ENCODE measurements at regions of chr12 and their contacts with region 1.

Region 1: DNA sequence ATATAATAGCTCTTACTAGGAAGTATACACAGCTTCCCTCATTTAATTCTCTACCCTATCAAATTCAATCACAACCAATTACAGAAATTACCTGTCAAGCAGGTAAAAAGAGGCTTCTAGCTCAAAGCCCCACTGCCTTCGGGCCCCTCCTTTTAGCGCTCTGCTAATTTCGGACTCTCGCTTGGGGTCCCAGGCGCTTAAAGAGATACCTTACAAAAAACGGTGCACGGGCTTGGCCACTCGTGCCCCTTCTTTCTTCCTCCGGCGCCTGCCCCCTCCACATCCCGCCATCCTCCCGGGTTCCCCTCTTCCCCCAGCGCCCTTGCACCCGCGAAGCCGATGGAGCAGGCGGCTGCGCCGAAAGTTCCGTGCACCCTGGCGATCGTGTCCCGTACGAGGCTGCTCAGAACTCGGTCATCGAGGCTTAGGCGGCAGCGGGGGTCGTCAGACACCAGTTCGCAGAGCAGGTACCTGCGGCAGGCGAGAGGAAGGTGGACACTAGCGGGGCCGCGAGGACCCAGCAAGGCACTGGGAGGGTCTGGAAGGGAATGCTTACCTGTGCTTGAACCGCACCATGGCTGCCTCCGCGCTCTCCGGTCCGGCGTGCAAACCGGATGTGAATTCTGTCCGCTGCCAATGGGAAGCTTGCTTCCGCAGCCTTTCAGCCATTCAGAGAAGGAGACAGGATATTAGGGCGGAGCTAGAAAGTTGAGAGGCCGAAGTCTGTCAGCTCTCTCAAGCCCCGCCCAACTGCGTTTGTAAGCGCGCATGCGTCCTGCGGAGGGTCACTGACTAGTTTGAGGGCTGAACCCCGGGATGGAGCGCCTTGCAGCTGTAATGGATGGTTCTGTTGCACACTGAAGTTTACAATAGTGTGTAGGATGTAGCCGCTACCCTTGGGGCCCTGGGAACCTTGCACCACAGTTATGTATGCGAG is at the start of gene POP5:
- DNase-seq: peak; percentile 75
- H3K4me3 ChIP-seq: peak within 1 kb of the TSS; percentile 60 to 90 (median 78)
- H3K27ac ChIP-seq: peak within 1 kb of the TSS; percentile 71 to 87 (median 80)
- H3K4me1 ChIP-seq: peaks cover 19 to 47% (median 33%) of the 10 kb centered on the region in 3 donors
- H3K27me3 ChIP-seq: peaks cover 0 to 12% (median 0%) of the 10 kb centered on the region in 4 donors
- CTCF ChIP-seq: peak in 2 of 6 experiments; percentile 8 to 31
- POLR2A ChIP-seq: peak in 3 of 4 donors; percentile 31 to 58 (median 48)
- total RNA-seq, gene POP5: 15.6 to 28.1 (median 22.6) TPM

Region 2: DNA sequence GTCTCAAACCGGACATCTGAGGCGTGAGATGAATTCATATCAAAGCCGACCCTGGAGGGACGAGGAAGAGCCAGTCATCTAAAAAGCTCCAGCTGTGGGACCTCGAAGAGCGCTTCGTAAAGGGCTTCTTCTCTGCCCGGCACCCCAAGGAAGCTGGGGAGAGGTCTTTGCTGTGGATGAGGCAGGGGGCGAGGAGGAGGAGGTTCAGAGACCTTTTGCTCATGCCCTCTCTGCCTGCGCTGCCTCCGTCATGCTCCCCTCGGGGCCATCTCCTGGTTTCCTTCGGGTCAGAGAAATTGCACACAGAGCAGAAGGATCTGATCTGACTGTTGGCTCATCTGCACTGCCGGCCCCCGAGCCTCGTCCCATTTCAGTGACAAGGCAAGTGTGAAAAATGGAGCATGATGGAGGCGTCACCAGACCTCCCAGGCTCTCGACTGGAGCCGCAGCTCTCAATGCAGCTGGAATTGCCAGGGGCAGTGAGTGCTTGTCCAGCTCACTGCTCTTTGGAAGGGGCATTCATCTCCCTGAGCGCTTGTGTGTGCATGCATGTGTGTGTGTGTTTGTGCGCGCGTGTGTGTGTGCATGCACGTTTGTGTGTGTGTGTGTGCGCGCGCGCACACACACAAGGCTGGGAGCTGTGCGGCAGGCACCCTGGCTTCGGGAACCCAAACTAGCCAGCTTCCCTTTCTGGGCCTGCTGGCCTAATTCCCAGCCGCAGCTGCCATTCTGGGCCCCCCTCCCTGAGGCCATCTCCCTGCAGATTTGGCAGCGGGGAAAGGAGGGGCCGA is 68.6 kb after region 1 on chr12:
- intact Hi-C with region 1: loop called (anchors 5 kb)
- DNase-seq: no peak
- H3K4me3 ChIP-seq: peak overlapping the region; percentile 5 to 60 (median 35)
- H3K27ac ChIP-seq: peak overlapping the region; percentile 32 to 82 (median 54)
- H3K4me1 ChIP-seq: peaks cover 6 to 40% (median 12%) of the 10 kb centered on the region in 3 donors
- H3K27me3 ChIP-seq: peaks cover 0 to 55% (median 3%) of the 10 kb centered on the region in 4 donors
- CTCF ChIP-seq: no peak
- POLR2A ChIP-seq: no peak

Region 3: DNA sequence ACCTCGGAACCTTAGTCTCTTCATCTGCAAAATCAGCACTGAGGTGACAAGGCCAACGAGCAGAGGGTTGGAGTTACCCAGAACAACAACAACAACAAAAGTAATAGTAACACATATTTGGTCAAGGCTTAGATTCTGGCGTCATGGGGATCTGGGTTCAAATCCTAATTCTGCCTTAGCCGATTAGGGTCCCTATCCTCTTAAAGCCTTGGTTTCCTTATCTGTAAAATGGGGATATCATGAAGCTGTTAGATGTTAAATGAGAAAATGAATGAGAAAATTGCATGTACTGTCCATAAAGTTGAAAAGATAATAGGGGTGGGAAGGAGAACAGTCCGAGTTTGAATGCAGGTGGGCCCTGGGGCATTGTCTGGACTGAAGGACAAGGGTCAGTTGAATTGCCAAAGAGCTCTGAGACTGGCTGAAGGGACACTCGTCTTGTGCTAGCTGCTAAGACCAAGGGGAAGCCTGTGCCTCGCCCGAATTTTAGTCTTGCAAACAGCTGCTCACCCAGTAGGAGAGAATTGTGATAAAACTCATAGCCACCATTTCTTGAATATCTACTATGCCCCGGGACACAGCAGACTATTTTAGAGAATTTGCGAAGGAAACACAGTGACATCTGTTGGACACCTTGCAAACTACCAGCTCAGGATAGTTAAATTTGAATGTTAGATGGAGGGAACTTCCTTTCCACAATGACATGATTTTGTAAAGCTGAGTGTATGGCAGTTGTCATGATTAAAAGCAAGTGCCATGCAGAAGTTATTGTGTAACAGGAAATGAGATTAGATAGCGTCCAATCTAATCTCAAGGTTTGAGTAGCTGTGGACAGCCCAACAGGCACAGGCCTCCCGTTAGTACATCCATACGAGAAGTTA is 390.5 kb after region 1 on chr12:
- intact Hi-C with region 1: loop called (anchors 10 kb)
- DNase-seq: no peak
- H3K4me3 ChIP-seq: no peak overlapping the region
- H3K27ac ChIP-seq: no peak overlapping the region
- H3K4me1 ChIP-seq: peaks cover 0 to 5% (median 0%) of the 10 kb centered on the region in 3 donors
- H3K27me3 ChIP-seq: no peaks in the 10 kb centered on the region
- CTCF ChIP-seq: peak; percentile 51 to 87 (median 67)
- POLR2A ChIP-seq: no peak

Measured in esophagus squamous epithelium (tissue), 5 donors.